A673 (cell line): ENCODE measurements at regions of chr7 and their contacts with region 1.

Region 1: DNA sequence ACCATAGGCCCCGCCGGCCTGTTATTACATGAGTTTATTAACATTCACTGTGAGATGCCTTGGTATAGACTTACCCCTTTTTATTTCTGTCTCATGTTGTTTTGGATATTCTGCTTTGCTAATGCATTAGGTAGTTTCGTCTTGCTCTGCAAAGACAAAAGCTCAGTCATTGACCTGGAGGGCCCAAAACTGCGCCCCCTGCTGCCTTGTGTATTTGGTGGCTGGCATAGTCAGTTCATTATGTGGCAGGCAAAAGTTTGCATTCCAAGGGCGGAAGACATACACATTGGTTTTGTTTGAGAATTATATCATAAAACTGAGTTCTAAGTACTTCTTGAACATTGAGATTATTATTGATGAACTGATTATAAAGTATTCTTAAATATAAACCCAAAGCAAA is 372.5 kb downstream of the SDK1 start:
- DNase-seq: peak; percentile 57
- H3K4me3 ChIP-seq: no peak overlapping the region
- H3K27ac ChIP-seq: no peak overlapping the region
- H3K4me1 ChIP-seq: peaks cover 15% of the 10 kb centered on the region
- H3K27me3 ChIP-seq: no peaks in the 10 kb centered on the region
- CTCF ChIP-seq: peak; percentile 69

Region 2: GRCh38 chr7:3300651-3301378 is 372.7 kb before region 1 on chr7 and contains the start of gene SDK1:
- CTCF ChIA-PET with region 1: no interaction called
- POLR2A ChIA-PET with region 1: no interaction called
- intact Hi-C with region 1: loop called (anchors 10 kb)
- DNase-seq: peak; percentile 93
- H3K4me3 ChIP-seq: peak within 1 kb of the TSS; percentile 63
- H3K27ac ChIP-seq: peak within 1 kb of the TSS; percentile 24
- H3K4me1 ChIP-seq: peaks cover 15% of the 10 kb centered on the region
- H3K27me3 ChIP-seq: peaks cover 30% of the 10 kb centered on the region
- CTCF ChIP-seq: peak; percentile 62
- total RNA-seq, gene SDK1: 14.7 and 17.0 TPM in 2 replicates

Region 3: DNA sequence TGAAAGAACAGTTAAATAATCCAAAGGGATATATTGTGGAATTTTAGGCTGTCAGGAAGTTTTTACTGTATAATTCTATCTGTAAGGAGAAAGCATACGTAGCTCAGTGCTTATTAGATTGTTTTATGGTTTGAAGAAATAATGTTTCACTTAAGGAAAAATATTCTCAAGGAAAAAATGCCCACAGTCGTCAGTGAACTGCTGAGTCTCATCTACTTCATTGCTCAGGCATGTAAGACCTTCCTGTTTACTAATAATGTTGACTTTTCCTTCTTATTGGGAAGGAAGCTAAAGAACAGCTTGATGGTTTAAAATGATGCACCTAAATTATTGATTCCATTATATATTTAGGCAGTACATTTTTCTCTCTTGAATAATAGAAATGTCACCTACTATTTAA is 68.3 kb before region 1 on chr7:
- CTCF ChIA-PET with region 1: no interaction called
- POLR2A ChIA-PET with region 1: no interaction called
- intact Hi-C with region 1: no loop called
- DNase-seq: no peak
- H3K4me3 ChIP-seq: no peak overlapping the region
- H3K27ac ChIP-seq: no peak overlapping the region
- H3K4me1 ChIP-seq: no peaks in the 10 kb centered on the region
- H3K27me3 ChIP-seq: no peaks in the 10 kb centered on the region
- CTCF ChIP-seq: no peak

Region 4: GRCh38 chr7:4257146-4258111 is 583.9 kb after region 1 on chr7:
- CTCF ChIA-PET with region 1: no interaction called
- POLR2A ChIA-PET with region 1: interaction called, 16 read pairs
- intact Hi-C with region 1: no loop called
- DNase-seq: no peak
- H3K4me3 ChIP-seq: no peak overlapping the region
- H3K27ac ChIP-seq: no peak overlapping the region
- H3K4me1 ChIP-seq: no peaks in the 10 kb centered on the region
- H3K27me3 ChIP-seq: no peaks in the 10 kb centered on the region
- CTCF ChIP-seq: no peak